ENCODE measurements at regions of chr11 and their contacts with region 1.

Region 1: DNA sequence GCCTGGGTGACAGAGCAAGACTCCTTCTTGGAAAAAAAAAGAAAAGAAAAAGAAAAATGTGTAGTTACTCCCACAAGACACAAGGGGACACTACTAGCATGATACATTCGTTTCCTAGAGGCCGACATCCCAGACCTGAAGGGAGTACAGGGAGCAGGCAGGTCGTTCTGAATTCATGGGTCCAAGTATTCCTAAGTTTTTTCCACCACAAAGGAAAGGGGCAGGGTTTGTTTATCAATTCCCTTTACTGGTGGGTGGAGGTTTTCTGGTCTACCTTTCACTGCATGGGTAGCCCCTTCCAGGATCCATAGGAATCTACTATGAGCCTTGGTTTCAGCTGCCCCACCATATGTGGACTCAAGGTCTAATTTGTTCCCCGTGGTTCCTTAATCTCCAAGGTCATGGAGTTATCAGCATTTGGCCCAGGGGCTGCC is 11.8 kb downstream of the TIGD3 start:
- DNase-seq: peak; percentile 59 to 69 (median 64)
- H3K4me3 ChIP-seq: no peak overlapping the region
- H3K4me3 Mint-ChIP-seq: no peak overlapping the region
- H3K27ac ChIP-seq: no peak overlapping the region
- H3K27ac Mint-ChIP-seq: no peak overlapping the region
- H3K4me1 ChIP-seq: no peaks in the 10 kb centered on the region
- H3K4me1 Mint-ChIP-seq: peaks cover 0 to 3% (median 1%) of the 10 kb centered on the region in 4 donors
- H3K27me3 ChIP-seq: no peaks in the 10 kb centered on the region
- H3K27me3 Mint-ChIP-seq: no peaks in the 10 kb centered on the region

Region 2: GRCh38 chr11:65352783-65353182 is 13.6 kb before region 1 on chr11:
- CTCF ChIA-PET with region 1: no interaction called
- POLR2A ChIA-PET with region 1: no interaction called
- intact Hi-C with region 1: no loop called
- DNase-seq: no peak
- H3K4me3 ChIP-seq: no peak overlapping the region
- H3K4me3 Mint-ChIP-seq: no peak overlapping the region
- H3K27ac ChIP-seq: no peak overlapping the region
- H3K27ac Mint-ChIP-seq: peak overlapping the region in 2 of 7 donors; percentile 40 to 78
- H3K4me1 ChIP-seq: peaks cover 7% of the 10 kb centered on the region
- H3K4me1 Mint-ChIP-seq: peaks cover 8 to 17% (median 11%) of the 10 kb centered on the region in 4 donors
- H3K27me3 ChIP-seq: no peaks in the 10 kb centered on the region
- H3K27me3 Mint-ChIP-seq: no peaks in the 10 kb centered on the region

Region 3: DNA sequence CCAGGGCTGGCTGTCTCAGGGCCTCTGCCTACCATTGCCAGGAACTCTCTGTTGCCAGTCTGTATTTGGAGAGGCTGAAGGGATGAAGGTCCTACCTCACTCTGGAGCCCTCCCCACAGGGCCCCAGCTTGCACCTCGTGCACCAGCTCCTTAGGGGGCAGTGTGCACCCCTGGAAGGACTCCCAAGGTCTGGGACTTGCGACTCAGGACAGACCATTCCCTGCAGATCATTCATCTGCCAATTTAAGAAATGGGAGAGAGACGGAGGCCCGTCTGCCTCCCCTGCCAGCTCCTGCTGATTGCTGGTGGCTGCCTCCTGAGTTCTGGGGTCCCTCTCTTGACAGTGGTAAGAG is 105.0 kb after region 1 on chr11:
- CTCF ChIA-PET with region 1: interaction called, 3 read pairs
- POLR2A ChIA-PET with region 1: no interaction called
- intact Hi-C with region 1: loop called (anchors 5 kb)
- DNase-seq: no peak
- H3K4me3 ChIP-seq: no peak overlapping the region
- H3K4me3 Mint-ChIP-seq: peak overlapping the region in 1 of 8 donors; percentile 74
- H3K27ac ChIP-seq: peak overlapping the region; percentile 74
- H3K27ac Mint-ChIP-seq: peak overlapping the region; percentile 88 to 99 (median 98)
- H3K4me1 ChIP-seq: peaks cover 18% of the 10 kb centered on the region
- H3K4me1 Mint-ChIP-seq: peaks cover 12 to 27% (median 22%) of the 10 kb centered on the region in 4 donors
- H3K27me3 ChIP-seq: no peaks in the 10 kb centered on the region
- H3K27me3 Mint-ChIP-seq: no peaks in the 10 kb centered on the region

Measured in CD4-positive, alpha-beta memory T cell (primary cell).